GM13976 (cell line): ENCODE measurements at regions of chr1 and their contacts with region 1.

Region 1: GRCh38 chr1:87084244-87084836 is 169.9 kb downstream of the HS2ST1 start:
- DNase-seq: peak; percentile 14
- CTCF ChIP-seq: peak; percentile 23

Region 2: DNA sequence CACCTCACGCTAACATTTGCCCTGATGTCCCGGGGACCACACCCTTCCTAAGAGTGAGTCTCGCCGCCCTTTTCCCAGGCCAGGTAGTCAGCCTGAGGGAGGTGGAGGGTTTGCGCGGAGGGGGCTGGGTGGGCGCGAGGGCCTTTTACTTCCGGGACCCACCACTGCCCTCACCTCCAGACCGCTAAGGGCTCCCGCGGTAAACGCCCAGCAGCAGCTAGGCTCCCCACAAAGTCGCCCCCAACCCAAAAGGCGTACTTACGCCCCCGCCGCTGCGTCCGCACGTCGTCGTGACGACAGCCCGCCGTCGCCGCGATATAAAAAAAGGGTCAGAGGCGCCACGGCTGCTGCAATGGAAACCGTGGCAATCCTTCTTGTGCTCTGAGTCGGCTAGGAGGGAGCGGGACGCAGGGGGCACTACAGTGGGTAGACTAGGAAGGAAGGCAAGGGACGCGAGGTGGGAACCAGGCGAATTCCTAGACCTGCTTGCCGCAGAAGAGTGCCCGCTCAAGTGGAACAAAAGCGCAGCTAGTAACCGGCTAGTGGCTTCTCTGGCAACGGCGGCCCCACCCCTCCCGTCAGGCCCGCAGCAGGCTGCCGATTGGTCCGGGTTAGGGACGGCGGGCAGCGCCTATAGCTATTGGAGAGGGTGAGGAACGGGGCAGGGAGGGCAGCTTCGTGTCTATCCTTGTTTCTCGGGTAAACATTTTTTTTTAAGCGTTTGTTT is 688.4 kb before region 1 on chr1 and contains the start of gene ODF2L:
- in situ Hi-C with region 1: loop called (anchors 25 kb)
- DNase-seq: peak; percentile 84
- CTCF ChIP-seq: no peak